Endothelial cell of umbilical vein (primary cell): ENCODE measurements at regions of chr3 and their contacts with region 1.

Region 1: GRCh38 chr3:137110484-137110883 is 152.7 kb downstream of the IL20RB start:
- DNase-seq: peak; percentile 16
- H3K4me3 ChIP-seq: no peak overlapping the region
- H3K27ac ChIP-seq: no peak overlapping the region
- H3K4me1 ChIP-seq: no peaks in the 10 kb centered on the region
- H3K27me3 ChIP-seq: peaks cover 11 to 19% of the 10 kb centered on the region in 2 experiments
- CTCF ChIP-seq: peak; percentile 38 to 64
- POLR2A ChIP-seq: no peak

Region 2: DNA sequence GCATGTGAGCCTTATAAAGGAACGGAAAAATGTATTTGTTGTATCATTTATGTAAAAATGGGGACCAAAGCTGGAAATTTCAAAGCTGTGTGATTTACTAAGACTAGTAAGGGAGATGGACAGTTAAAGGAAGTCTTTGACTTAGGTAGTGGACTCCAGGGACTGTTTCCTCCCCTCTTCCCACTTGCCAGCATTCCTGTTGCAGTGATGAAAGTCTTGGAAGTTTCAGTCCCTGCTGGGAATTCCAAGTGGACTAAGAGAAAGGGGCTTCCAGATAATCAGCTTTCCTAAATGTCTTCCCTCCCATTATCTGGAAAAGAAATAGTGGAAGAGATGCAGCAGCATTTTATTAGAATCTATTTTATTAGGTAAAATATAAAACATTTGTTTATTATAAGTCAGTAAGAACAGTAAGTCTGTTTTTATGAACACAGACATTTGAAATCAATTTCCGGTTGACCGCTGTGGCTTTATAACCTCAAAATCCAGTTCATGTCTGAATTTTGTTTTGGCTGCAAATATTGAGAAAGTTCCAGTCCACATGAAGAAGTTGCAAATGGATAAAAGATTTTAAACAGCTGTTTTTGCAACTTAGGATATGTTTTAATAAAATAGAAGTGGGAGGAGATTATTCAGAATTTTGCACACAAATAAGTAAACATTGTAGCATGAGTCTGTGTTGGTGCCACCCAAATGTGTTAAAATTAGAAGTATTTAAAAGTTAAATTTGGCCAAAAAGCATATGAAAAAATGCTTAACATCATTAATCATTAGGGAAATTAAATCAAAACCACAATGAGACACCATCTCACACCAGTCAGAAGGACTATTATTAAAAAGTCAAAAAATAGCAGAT is 10.9 kb before region 1 on chr3:
- CTCF ChIA-PET with region 1: interaction called, 45 read pairs
- POLR2A ChIA-PET with region 1: no interaction called
- dilution Hi-C with region 1: no loop called
- intact Hi-C with region 1: no loop called
- DNase-seq: no peak
- H3K4me3 ChIP-seq: no peak overlapping the region
- H3K27ac ChIP-seq: no peak overlapping the region
- H3K4me1 ChIP-seq: no peaks in the 10 kb centered on the region
- H3K27me3 ChIP-seq: no peaks in the 10 kb centered on the region
- CTCF ChIP-seq: no peak
- POLR2A ChIP-seq: no peak

Region 3: GRCh38 chr3:137121704-137122314 is 11.3 kb after region 1 on chr3:
- CTCF ChIA-PET with region 1: interaction called, 27 read pairs
- POLR2A ChIA-PET with region 1: no interaction called
- dilution Hi-C with region 1: no loop called
- intact Hi-C with region 1: no loop called
- DNase-seq: peak; percentile 30
- H3K4me3 ChIP-seq: no peak overlapping the region
- H3K27ac ChIP-seq: no peak overlapping the region
- H3K4me1 ChIP-seq: no peaks in the 10 kb centered on the region
- H3K27me3 ChIP-seq: peaks cover 0 to 2% of the 10 kb centered on the region in 2 experiments
- CTCF ChIP-seq: peak; percentile 38 to 71
- POLR2A ChIP-seq: no peak

Region 4: GRCh38 chr3:137792626-137793271 is 682.3 kb after region 1 on chr3:
- CTCF ChIA-PET with region 1: no interaction called
- POLR2A ChIA-PET with region 1: no interaction called
- dilution Hi-C with region 1: no loop called
- intact Hi-C with region 1: loop called (anchors 2 kb)
- DNase-seq: no peak
- H3K4me3 ChIP-seq: no peak overlapping the region
- H3K27ac ChIP-seq: no peak overlapping the region
- H3K4me1 ChIP-seq: no peaks in the 10 kb centered on the region
- H3K27me3 ChIP-seq: no peaks in the 10 kb centered on the region
- CTCF ChIP-seq: peak; percentile 19 to 45
- POLR2A ChIP-seq: no peak

Region 5: DNA sequence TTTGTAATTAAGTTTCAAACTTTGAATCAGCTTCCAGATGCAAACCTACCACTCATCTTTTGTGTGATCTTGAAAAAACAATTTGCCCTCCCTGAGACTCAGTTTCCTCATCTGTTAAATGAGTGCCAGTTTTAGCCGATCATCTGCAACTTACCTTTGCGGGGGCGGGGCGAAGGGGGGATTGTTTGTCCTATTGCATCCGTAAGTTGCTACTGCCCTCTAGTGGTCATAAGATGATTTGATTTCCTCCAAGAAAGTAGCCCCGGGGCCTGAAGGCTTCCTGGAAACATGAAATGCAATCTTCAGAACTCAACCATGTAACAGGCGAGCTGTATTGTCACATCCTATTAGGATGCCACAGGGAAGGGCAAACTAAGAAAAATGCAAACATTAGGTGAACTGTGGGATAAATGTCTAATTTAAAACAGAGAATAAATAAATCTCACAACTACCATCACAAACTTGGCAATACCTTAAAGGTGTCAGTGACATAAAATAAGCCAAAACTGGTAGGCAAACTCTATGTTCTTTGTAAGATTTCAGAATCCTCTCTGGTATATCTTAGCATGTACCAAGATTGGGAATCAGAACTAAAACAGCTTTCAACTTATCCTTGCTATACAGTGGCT is 836.0 kb after region 1 on chr3:
- CTCF ChIA-PET with region 1: interaction called, 40 read pairs
- POLR2A ChIA-PET with region 1: no interaction called
- dilution Hi-C with region 1: no loop called
- intact Hi-C with region 1: loop called (anchors 1 kb)
- DNase-seq: peak; percentile 57
- H3K4me3 ChIP-seq: no peak overlapping the region
- H3K27ac ChIP-seq: no peak overlapping the region
- H3K4me1 ChIP-seq: no peaks in the 10 kb centered on the region
- H3K27me3 ChIP-seq: no peaks in the 10 kb centered on the region
- CTCF ChIP-seq: peak; percentile 62 to 67
- POLR2A ChIP-seq: no peak

Region 6: GRCh38 chr3:137970914-137971831 is 860.7 kb after region 1 on chr3:
- CTCF ChIA-PET with region 1: interaction called, 16 read pairs
- POLR2A ChIA-PET with region 1: no interaction called
- dilution Hi-C with region 1: no loop called
- intact Hi-C with region 1: loop called (anchors 1 kb)
- DNase-seq: peak; percentile 59
- H3K4me3 ChIP-seq: no peak overlapping the region
- H3K27ac ChIP-seq: no peak overlapping the region
- H3K4me1 ChIP-seq: no peaks in the 10 kb centered on the region
- H3K27me3 ChIP-seq: peaks cover 2 to 5% of the 10 kb centered on the region in 2 experiments
- CTCF ChIP-seq: peak; percentile 82 to 92
- POLR2A ChIP-seq: no peak

Region 7: GRCh38 chr3:138051946-138052802 is 941.7 kb after region 1 on chr3:
- CTCF ChIA-PET with region 1: interaction called, 30 read pairs
- POLR2A ChIA-PET with region 1: no interaction called
- dilution Hi-C with region 1: no loop called
- intact Hi-C with region 1: loop called (anchors 1 kb)
- DNase-seq: peak; percentile 38
- H3K4me3 ChIP-seq: no peak overlapping the region
- H3K27ac ChIP-seq: no peak overlapping the region
- H3K4me1 ChIP-seq: no peaks in the 10 kb centered on the region
- H3K27me3 ChIP-seq: no peaks in the 10 kb centered on the region
- CTCF ChIP-seq: peak; percentile 60 to 72
- POLR2A ChIP-seq: no peak